ENCODE measurements at regions of chr2 and their contacts with region 1.

Region 1: DNA sequence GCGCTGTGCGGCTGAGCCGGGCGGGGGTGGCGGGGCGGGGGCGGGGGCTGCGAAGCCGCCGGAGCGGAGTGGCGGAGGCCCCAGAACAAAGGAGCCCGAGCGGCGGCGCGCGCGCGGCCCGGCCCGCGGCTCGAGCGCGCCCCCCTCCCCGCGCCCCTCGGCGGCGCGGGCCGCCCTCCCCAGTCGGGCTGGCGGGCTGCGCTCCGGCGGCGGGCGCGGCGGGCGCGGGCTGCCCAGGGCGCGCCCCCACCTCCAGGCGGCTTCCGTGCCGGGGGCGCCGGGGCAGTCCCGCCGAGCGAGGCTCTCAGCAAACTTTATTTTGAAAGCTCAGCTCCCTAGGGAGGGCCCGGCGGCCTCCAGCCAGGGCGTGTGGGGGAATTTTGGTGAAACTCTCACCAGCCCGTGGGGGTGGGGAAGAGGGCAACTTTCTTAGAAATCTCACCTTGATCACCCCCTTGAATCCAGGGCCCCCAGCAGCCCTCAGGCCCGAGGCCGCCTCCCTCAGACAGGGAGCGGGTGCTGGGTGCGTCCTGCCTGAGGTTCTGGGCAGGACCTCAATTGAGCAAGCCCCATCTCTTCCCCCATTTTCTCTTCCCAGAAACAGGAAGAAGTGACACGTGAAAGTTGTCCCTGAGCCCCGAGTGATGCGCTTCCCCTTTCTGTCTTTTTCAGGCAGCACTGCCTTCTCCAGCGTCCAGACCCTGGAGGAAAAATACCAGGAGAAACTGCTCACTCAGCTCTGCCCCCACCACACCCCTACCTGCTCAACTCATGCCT is 786 bp downstream of the TET3 start:
- DNase-seq: peak; percentile 42
- H3K4me3 Mint-ChIP-seq: peak overlapping the region; percentile 74
- H3K27ac Mint-ChIP-seq: no peak overlapping the region
- H3K4me1 Mint-ChIP-seq: peaks cover 57% of the 10 kb centered on the region
- H3K27me3 Mint-ChIP-seq: no peaks in the 10 kb centered on the region
- CTCF ChIP-seq: no peak

Region 2: DNA sequence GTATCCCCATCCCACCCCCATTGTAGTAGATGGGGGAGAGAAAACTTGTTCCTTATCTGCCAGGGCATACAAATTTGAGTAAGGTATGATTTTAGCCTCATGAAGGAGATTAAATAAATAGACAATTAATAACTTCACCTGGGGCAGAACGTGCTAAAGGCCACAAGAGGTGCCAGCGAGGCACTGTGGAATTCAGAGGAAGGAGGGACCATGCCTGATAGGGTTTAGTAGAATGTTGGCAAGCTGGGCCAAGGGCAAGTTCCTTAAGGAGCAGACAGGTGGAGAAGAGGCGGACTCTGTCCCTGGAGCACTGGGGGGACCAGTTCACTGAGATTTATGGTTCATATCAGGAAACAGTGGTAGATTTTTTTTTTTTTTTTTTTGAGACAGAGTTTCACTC is 134.2 kb before region 1 on chr2:
- CTCF ChIA-PET with region 1: no interaction called
- POLR2A ChIA-PET with region 1: interaction called, 3 read pairs
- intact Hi-C with region 1: loop called (anchors 10 kb)
- DNase-seq: peak; percentile 46
- H3K4me3 Mint-ChIP-seq: no peak overlapping the region
- H3K27ac Mint-ChIP-seq: no peak overlapping the region
- H3K4me1 Mint-ChIP-seq: peaks cover 5% of the 10 kb centered on the region
- H3K27me3 Mint-ChIP-seq: no peaks in the 10 kb centered on the region
- CTCF ChIP-seq: peak; percentile 28

Region 3: DNA sequence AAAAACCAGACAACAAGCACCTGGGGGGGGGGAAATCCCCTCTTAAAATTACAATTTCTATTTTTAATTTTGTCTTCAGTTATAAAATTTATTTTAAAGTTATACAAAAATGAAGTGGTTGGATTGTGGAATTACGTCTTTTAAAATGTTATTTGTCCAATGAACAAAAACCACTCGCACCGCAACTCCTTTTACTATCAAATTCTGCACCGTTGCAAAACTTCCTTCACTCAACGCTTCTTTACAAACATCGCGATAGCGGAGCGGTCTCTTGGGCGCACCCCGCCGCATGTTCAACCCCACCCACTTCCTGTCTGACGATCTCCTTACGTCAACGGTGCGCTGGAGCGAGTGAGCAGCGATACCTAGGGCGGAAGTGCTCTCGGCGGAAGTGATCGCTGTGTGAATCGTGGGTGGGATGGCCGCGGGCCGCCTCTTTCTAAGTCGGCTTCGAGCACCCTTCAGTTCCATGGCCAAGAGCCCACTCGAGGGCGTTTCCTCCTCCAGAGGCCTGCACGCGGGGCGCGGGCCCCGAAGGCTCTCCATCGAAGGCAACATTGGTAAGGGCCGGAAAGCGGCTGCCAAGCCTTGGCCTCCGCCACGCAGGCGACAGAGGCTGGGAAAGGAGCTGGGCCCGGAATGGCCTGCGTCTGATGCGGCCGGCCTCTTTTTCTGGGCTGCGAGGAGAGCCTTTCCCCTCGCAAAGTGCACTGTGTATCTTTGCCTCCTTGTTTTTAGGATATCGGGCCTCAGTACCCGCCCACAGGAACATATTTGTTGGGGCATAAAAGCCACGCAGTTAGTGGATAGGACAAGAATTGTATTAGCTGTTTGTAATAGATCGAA is 58.8 kb before region 1 on chr2 and contains the start of gene DGUOK:
- CTCF ChIA-PET with region 1: no interaction called
- POLR2A ChIA-PET with region 1: interaction called, 13 read pairs
- intact Hi-C with region 1: no loop called
- DNase-seq: peak; percentile 99
- H3K4me3 Mint-ChIP-seq: peak within 1 kb of the TSS; percentile 85
- H3K27ac Mint-ChIP-seq: peak within 1 kb of the TSS; percentile 97
- H3K4me1 Mint-ChIP-seq: peaks cover 47% of the 10 kb centered on the region
- H3K27me3 Mint-ChIP-seq: no peaks in the 10 kb centered on the region
- CTCF ChIP-seq: no peak
- total RNA-seq, gene DGUOK: 74.4 and 92.3 TPM in 2 replicates

Region 4: GRCh38 chr2:73939419-73939818 is 46.1 kb before region 1 on chr2:
- CTCF ChIA-PET with region 1: interaction called, 7 read pairs
- POLR2A ChIA-PET with region 1: interaction called, 15 read pairs
- intact Hi-C with region 1: loop called (anchors 5 kb)
- DNase-seq: peak; percentile 91
- H3K4me3 Mint-ChIP-seq: peak overlapping the region; percentile 30
- H3K27ac Mint-ChIP-seq: peak overlapping the region; percentile 91
- H3K4me1 Mint-ChIP-seq: peaks cover 38% of the 10 kb centered on the region
- H3K27me3 Mint-ChIP-seq: no peaks in the 10 kb centered on the region
- CTCF ChIP-seq: peak; percentile 54

Region 5: DNA sequence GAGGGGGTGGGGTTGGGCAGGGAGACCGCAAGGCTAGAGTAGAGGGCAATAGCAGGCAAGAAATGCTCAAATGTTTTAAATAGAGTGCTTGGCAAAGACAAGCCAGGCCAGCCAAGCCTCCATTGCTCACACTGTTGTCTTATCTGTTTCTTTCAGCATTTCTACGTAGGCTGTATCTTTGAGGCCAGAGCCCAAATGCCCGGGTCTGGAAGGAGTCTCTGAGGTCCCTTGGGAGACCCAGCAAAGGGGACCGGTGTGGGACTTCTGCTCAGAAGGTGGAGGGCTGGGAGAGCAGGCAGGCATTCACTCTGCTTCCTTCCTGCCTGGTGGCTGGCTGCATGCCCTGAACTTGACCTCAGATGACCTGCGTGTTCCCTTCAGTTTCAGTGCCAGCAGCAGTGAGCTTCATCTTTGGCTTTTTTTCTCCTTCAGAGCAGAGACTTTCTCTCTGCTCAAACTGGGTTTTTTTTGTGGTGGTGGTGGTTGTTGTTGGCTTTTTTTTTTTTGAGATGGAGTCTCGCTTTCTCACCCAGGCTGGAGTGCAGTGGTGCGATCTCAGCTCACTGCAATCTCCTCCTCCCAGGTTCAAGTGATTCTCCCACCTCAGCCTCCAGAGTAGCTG is 14.5 kb before region 1 on chr2:
- CTCF ChIA-PET with region 1: interaction called, 5 read pairs
- POLR2A ChIA-PET with region 1: interaction called, 20 read pairs
- intact Hi-C with region 1: no loop called
- DNase-seq: no peak
- H3K4me3 Mint-ChIP-seq: no peak overlapping the region
- H3K27ac Mint-ChIP-seq: no peak overlapping the region
- H3K4me1 Mint-ChIP-seq: no peaks in the 10 kb centered on the region
- H3K27me3 Mint-ChIP-seq: no peaks in the 10 kb centered on the region
- CTCF ChIP-seq: no peak

Measured in MCF 10A (cell line).